Testis (tissue), 5 donors: ENCODE measurements at regions of chr3 and their contacts with region 1.

Region 1: GRCh38 chr3:69691860-69692259 is 47.4 kb upstream of the MITF start:
- DNase-seq: no peak
- H3K4me3 ChIP-seq: no peak overlapping the region
- H3K27ac ChIP-seq: no peak overlapping the region
- H3K4me1 ChIP-seq: peaks cover under 1% of the 10 kb centered on the region
- H3K27me3 ChIP-seq: no peaks in the 10 kb centered on the region
- CTCF ChIP-seq: no peak
- POLR2A ChIP-seq: no peak

Region 2: GRCh38 chr3:69212411-69213139 is 479.3 kb before region 1 on chr3:
- intact Hi-C with region 1: no loop called
- DNase-seq: no peak
- H3K4me3 ChIP-seq: no peak overlapping the region
- H3K27ac ChIP-seq: no peak overlapping the region
- H3K4me1 ChIP-seq: no peaks in the 10 kb centered on the region
- H3K27me3 ChIP-seq: no peaks in the 10 kb centered on the region
- CTCF ChIP-seq: no peak
- POLR2A ChIP-seq: no peak

Region 3: DNA sequence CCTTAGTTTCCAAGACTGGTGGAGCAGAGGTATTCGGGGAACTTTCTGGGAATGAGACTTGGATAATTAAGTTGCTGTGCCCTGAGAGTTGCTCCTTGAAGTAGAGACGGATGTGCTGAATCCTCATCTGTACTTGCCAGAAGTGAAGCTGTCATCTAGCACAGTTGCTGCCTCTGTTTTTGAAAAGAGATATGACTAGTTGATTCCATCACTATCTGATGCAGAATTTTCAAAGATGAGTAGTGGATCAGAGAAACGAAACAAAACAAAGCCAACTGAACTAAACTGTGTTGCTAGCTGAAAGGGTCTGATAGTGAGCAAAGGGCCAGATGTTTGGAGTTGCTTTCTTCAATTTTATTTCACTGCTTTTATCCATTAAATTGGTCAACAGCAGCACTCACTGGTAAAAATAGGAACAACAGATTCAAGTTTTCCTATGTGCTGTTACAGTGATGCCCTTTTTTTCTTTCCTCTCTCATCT is 100.1 kb after region 1 on chr3:
- intact Hi-C with region 1: loop called (anchors 10 kb)
- DNase-seq: no peak
- H3K4me3 ChIP-seq: no peak overlapping the region
- H3K27ac ChIP-seq: no peak overlapping the region
- H3K4me1 ChIP-seq: peaks cover 5% of the 10 kb centered on the region
- H3K27me3 ChIP-seq: no peaks in the 10 kb centered on the region
- CTCF ChIP-seq: peak; percentile 22 to 39 (median 34)
- POLR2A ChIP-seq: no peak

Region 4: GRCh38 chr3:69948246-69948862 is 256.5 kb after region 1 on chr3:
- intact Hi-C with region 1: loop called (anchors 5 kb)
- DNase-seq: no peak
- H3K4me3 ChIP-seq: no peak overlapping the region
- H3K27ac ChIP-seq: no peak overlapping the region
- H3K4me1 ChIP-seq: peaks cover 6% of the 10 kb centered on the region
- H3K27me3 ChIP-seq: no peaks in the 10 kb centered on the region
- CTCF ChIP-seq: peak in 2 of 3 experiments; percentile 20 to 50
- POLR2A ChIP-seq: no peak

Region 5: GRCh38 chr3:69999191-70000027 is 307.5 kb after region 1 on chr3 and contains the start of gene SAMMSON:
- intact Hi-C with region 1: no loop called
- DNase-seq: peak; percentile 73
- H3K4me3 ChIP-seq: peak within 1 kb of the TSS; percentile 35 to 51
- H3K27ac ChIP-seq: peak within 1 kb of the TSS; percentile 15
- H3K4me1 ChIP-seq: no peaks in the 10 kb centered on the region
- H3K27me3 ChIP-seq: no peaks in the 10 kb centered on the region
- CTCF ChIP-seq: no peak
- POLR2A ChIP-seq: no peak
- total RNA-seq, gene SAMMSON: 3.5 to 3.8 TPM